ENCODE measurements at regions of chr7 and their contacts with region 1.

Region 1: GRCh38 chr7:113698556-113699220 is 220.1 kb downstream of the PPP1R3A start:
- DNase-seq: no peak
- ATAC-seq: peak; percentile 58; the same call in 1 of the 3 replicates
- H3K4me3 ChIP-seq: no peak overlapping the region
- H3K27ac ChIP-seq: no peak overlapping the region
- H3K4me1 ChIP-seq: no peaks in the 10 kb centered on the region
- H3K27me3 ChIP-seq: no peaks in the 10 kb centered on the region
- CTCF ChIP-seq: peak; percentile 58 to 68 (median 64); a peak in 5 of 6 replicates
- EP300 ChIP-seq: no peak
- POLR2A ChIP-seq: no peak
- RAD21 ChIP-seq: peak; percentile 69

Region 2: GRCh38 chr7:112550468-112551060 is 1148.1 kb before region 1 on chr7:
- CTCF ChIA-PET with region 1: interaction called, 4 read pairs
- POLR2A ChIA-PET with region 1: no interaction called
- RAD21 ChIA-PET with region 1: no interaction called
- SMC1A ChIA-PET with region 1: no interaction called
- in situ Hi-C with region 1: loop called (anchors 10 kb)
- intact Hi-C with region 1: no loop called
- DNase-seq: peak; percentile 23
- ATAC-seq: peak; percentile 90
- H3K4me3 ChIP-seq: no peak overlapping the region
- H3K27ac ChIP-seq: no peak overlapping the region
- H3K4me1 ChIP-seq: no peaks in the 10 kb centered on the region
- H3K27me3 ChIP-seq: no peaks in the 10 kb centered on the region; a peak in 1 of 4 replicates
- CTCF ChIP-seq: peak; percentile 84 to 94 (median 87)
- EP300 ChIP-seq: no peak
- POLR2A ChIP-seq: no peak
- RAD21 ChIP-seq: peak; percentile 100

Region 3: DNA sequence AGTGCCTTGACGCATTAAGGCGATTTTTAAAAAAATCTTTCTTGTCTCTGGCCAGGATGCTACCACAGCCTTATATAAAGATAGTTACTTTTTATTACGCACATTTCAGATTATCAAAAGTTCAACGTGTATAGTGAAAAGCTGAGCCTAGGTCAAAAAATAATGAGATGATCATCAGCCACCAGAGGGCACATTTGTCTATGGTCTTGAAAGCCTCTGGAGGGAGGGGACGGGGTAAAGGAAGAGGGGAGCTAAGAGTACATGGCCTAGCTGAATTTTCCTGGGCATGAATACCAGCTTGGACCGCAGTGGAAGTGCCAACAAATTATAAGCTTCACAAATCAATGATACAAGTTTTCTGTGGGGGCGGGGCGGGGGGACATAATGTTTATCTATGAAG is 294.4 kb before region 1 on chr7:
- CTCF ChIA-PET with region 1: interaction called, 3 read pairs
- POLR2A ChIA-PET with region 1: no interaction called
- RAD21 ChIA-PET with region 1: interaction called, 3 read pairs
- SMC1A ChIA-PET with region 1: interaction called, 3 read pairs
- in situ Hi-C with region 1: loop called (anchors 10 kb)
- intact Hi-C with region 1: loop called (anchors 2 kb)
- DNase-seq: no peak
- ATAC-seq: peak; percentile 76
- H3K4me3 ChIP-seq: no peak overlapping the region
- H3K27ac ChIP-seq: no peak overlapping the region
- H3K4me1 ChIP-seq: no peaks in the 10 kb centered on the region
- H3K27me3 ChIP-seq: no peaks in the 10 kb centered on the region
- CTCF ChIP-seq: peak; percentile 17 to 36 (median 30); a peak in 3 of 6 replicates
- EP300 ChIP-seq: no peak
- POLR2A ChIP-seq: no peak
- RAD21 ChIP-seq: 0 out of 2 replicates have a peak, but pooled peaks have one; percentile 23

Region 4: GRCh38 chr7:113636727-113637421 is 61.8 kb before region 1 on chr7:
- CTCF ChIA-PET with region 1: interaction called, 3 read pairs
- POLR2A ChIA-PET with region 1: no interaction called
- RAD21 ChIA-PET with region 1: no interaction called
- SMC1A ChIA-PET with region 1: no interaction called
- in situ Hi-C with region 1: no loop called
- intact Hi-C with region 1: loop called (anchors 5 kb)
- DNase-seq: no peak
- ATAC-seq: 0 out of 3 replicates have a peak, but pooled peaks have one; percentile 16
- H3K4me3 ChIP-seq: no peak overlapping the region
- H3K27ac ChIP-seq: no peak overlapping the region
- H3K4me1 ChIP-seq: no peaks in the 10 kb centered on the region
- H3K27me3 ChIP-seq: no peaks in the 10 kb centered on the region
- CTCF ChIP-seq: no peak
- EP300 ChIP-seq: no peak
- POLR2A ChIP-seq: no peak
- RAD21 ChIP-seq: no peak

Region 5: DNA sequence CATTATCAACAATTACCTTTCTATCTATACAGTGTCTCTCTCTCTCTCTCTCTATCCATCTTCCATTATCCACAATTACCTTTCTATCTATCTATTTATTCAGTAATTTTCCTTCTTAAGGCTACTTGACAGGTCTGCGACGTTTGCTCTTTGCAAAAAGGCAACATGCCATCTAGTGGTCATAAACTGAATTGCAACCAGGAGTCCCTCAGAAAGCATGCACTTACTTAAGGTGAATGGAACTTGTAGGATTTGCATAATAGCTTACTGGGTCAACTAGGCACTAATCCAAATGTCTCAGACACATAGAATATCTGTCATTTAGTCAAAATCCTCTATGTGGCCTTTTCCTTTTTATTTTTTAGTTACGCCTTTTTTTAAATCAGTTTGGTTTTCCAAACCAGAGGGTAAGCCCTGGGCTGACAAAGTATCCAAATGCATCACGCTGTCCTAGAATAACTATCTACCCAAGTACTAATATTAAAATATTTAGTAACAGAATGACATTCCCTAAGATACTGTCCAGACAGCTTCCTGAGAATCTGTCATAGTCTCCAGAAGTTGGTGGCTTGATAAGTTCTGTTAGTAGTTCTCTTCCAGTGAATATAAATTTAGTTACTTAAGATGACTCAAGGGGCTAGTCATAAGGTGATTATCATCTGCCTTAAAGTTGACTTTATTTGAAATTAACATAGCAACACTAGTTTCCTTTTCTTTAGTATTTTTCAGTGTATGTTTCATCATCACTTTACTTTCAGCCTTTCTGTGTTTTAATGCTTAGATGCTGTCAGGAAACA is 11.8 kb after region 1 on chr7:
- CTCF ChIA-PET with region 1: interaction called, 11 read pairs
- POLR2A ChIA-PET with region 1: no interaction called
- RAD21 ChIA-PET with region 1: interaction called, 4 read pairs
- SMC1A ChIA-PET with region 1: interaction called, 3 read pairs
- in situ Hi-C with region 1: no loop called
- intact Hi-C with region 1: no loop called
- DNase-seq: peak; percentile 44
- ATAC-seq: peak; percentile 95
- H3K4me3 ChIP-seq: no peak overlapping the region
- H3K27ac ChIP-seq: no peak overlapping the region
- H3K4me1 ChIP-seq: no peaks in the 10 kb centered on the region
- H3K27me3 ChIP-seq: no peaks in the 10 kb centered on the region
- CTCF ChIP-seq: peak; percentile 78 to 97 (median 91)
- EP300 ChIP-seq: no peak
- POLR2A ChIP-seq: no peak
- RAD21 ChIP-seq: peak; percentile 62

Region 6: DNA sequence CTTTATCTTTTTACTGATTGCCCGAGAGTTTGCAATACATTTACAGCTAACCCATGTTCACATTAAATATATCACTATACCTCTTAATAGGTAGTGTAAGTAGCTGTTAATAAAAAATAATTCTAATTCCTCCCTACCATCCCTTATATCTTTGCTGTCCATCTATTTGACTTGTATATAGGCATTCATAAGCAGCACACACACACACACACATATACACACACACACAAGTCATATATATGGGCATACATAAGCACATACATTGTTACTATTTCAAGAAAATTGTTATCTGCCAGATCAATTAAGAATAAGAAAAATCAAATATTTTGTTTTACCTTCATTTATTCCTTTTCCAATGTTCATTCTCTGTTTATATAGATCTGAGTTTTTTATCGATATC is 43.7 kb after region 1 on chr7:
- CTCF ChIA-PET with region 1: no interaction called
- POLR2A ChIA-PET with region 1: no interaction called
- RAD21 ChIA-PET with region 1: no interaction called
- SMC1A ChIA-PET with region 1: no interaction called
- in situ Hi-C with region 1: no loop called
- intact Hi-C with region 1: no loop called
- DNase-seq: no peak
- ATAC-seq: no peak
- H3K4me3 ChIP-seq: no peak overlapping the region
- H3K27ac ChIP-seq: no peak overlapping the region
- H3K4me1 ChIP-seq: no peaks in the 10 kb centered on the region
- H3K27me3 ChIP-seq: no peaks in the 10 kb centered on the region
- CTCF ChIP-seq: no peak
- EP300 ChIP-seq: no peak
- POLR2A ChIP-seq: no peak
- RAD21 ChIP-seq: no peak

Region 7: DNA sequence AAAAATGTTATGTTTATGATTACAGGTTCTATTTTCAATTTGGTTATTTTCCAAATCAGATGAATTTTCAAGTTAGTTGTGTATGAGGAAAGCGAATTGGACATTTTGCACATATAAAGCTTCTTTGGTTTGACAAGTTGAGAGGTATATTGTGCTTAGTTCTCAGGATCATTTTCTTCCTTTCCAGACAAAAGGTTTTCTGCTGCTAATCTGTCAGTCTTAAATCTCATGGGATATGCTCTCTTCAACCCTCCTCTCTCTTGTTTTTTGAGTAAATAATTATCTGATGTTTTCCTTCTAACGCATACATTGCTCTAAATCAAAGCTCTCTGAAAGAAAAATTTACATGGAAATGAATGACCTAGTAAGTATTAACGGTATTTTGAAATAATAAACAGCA is 142.3 kb after region 1 on chr7:
- CTCF ChIA-PET with region 1: no interaction called
- POLR2A ChIA-PET with region 1: no interaction called
- RAD21 ChIA-PET with region 1: no interaction called
- SMC1A ChIA-PET with region 1: no interaction called
- in situ Hi-C with region 1: no loop called
- intact Hi-C with region 1: no loop called
- DNase-seq: no peak
- ATAC-seq: no peak
- H3K4me3 ChIP-seq: no peak overlapping the region
- H3K27ac ChIP-seq: no peak overlapping the region
- H3K4me1 ChIP-seq: no peaks in the 10 kb centered on the region
- H3K27me3 ChIP-seq: no peaks in the 10 kb centered on the region
- CTCF ChIP-seq: no peak
- EP300 ChIP-seq: no peak
- POLR2A ChIP-seq: no peak
- RAD21 ChIP-seq: no peak

Measured in GM12878 (cell line).